Esophagus muscularis mucosa (tissue), 4 donors: ENCODE measurements at regions of chr4 and their contacts with region 1.

Region 1: GRCh38 chr4:6909073-6909965 is at the start of gene TBC1D14:
- DNase-seq: peak; percentile 97
- H3K4me3 ChIP-seq: peak within 1 kb of the TSS; percentile 72 to 90 (median 82)
- H3K27ac ChIP-seq: peak within 1 kb of the TSS; percentile 95 to 99 (median 98)
- H3K4me1 ChIP-seq: peaks cover 22 to 52% (median 48%) of the 10 kb centered on the region in 4 donors
- H3K27me3 ChIP-seq: peaks cover 0 to 5% (median 0%) of the 10 kb centered on the region in 4 donors
- CTCF ChIP-seq: peak in 2 of 3 experiments; percentile 20 to 35
- EP300 ChIP-seq: no peak
- POLR2A ChIP-seq: peak; percentile 45
- total RNA-seq, gene TBC1D14: 37.0 to 49.4 (median 44.2) TPM

Region 2: GRCh38 chr4:6986781-6987587 is 77.7 kb after region 1 on chr4:
- intact Hi-C with region 1: loop called (anchors 2 kb)
- DNase-seq: peak; percentile 98
- H3K4me3 ChIP-seq: peak overlapping the region; percentile 72 to 90 (median 89)
- H3K27ac ChIP-seq: peak overlapping the region; percentile 89 to 97 (median 94)
- H3K4me1 ChIP-seq: peaks cover 45 to 71% (median 66%) of the 10 kb centered on the region in 4 donors
- H3K27me3 ChIP-seq: no peaks in the 10 kb centered on the region
- CTCF ChIP-seq: peak in 1 of 3 experiments; percentile 5
- EP300 ChIP-seq: no peak
- POLR2A ChIP-seq: peak; percentile 55